Transverse colon (tissue), 4 donors: ENCODE measurements at regions of chr2 and their contacts with region 1.

Region 1: DNA sequence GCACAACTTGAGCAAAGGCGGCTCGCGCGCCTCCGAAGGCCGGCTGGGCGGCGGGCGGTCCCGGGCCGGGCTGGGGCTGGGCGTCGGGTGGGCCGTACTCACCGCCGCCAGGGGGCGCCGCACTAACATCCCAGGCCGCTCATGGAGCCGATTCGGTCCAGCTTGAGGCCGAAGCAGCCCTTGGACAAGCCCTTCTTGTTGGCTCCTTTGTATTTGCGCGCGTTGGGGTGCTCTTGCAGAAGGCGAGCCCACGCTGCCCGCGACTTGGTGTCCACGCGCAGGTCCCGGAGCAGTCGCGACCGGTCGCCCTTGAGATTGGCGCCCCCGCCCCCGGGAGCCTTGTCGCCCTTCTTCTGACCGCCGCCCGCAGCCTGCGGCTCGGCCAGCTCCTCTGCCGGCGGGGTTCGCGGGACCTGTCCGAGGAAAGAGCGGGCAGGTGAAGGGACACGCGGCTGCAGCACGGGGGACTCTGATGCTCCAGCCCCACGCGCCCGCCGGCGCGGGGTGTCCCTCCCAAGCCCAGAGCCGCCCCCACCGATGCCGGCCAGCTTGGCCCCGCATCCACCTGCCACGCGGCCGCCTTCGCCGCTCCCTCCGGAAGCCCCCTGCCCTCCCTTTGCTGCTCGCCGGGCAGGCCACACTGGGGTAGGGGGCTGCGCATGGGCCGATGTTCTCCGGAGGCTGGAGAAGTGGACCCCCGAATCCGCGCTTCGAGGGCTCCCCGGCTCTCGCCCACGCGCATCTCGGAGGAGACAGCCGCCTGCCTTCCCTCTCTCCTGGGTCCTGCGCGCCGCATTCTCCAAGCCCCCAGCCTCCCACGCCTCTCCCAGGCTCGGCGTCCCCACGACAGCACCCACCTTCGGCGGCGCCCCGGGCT is 655 bp downstream of the NPPC start:
- DNase-seq: peak; percentile 83
- H3K4me3 ChIP-seq: peak overlapping the region; percentile 13 to 49 (median 24)
- H3K27ac ChIP-seq: no peak overlapping the region
- H3K4me1 ChIP-seq: peaks cover 13 to 24% (median 20%) of the 10 kb centered on the region in 4 donors
- H3K27me3 ChIP-seq: peaks cover 74% of the 10 kb centered on the region
- CTCF ChIP-seq: peak; percentile 47 to 94 (median 90)
- EP300 ChIP-seq: no peak
- POLR2A ChIP-seq: no peak

Region 2: DNA sequence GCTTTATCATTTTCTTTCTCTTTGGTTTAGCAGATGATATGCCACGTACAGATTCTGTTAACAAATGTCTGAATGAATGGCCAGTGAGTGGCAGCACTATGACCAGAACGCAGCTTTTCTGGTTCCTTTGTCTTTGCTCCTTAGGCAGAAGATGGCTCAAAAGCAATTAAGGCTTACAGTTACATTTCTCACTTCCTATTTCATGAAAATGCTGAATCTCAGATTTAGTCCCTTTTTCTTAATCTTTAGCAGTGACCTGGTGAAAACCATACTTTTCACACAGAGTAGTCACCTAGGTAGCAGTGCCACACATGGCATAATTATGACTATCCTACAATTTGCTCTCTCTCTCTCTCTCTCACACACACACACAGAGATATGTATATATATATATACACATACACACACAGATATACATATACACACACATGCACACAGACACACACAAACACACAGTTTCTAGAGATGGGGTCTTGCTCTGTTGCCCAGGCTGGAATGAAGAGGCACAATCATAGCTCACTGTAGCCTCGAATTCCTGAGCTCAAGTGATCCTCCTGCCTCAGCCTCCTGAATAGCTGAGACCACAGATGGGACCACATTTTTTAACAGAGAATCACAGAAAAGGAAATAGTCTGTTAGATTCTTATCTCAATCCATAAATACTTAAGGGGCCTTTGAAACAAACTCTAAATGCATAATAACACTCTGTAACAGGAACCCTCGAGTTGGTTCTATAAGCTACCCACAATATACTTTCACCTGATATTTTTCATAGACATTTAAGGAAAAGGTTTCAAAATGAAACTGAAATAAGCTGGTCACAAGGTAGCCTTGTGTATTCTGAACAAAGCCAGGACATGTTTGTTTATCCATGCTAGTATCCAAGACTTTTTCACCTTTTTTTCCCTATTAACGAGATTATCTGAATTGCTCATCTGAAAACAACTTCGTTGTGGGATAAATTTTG is 156.1 kb before region 1 on chr2:
- in situ Hi-C with region 1: no loop called
- intact Hi-C with region 1: no loop called
- DNase-seq: no peak
- H3K4me3 ChIP-seq: no peak overlapping the region
- H3K27ac ChIP-seq: no peak overlapping the region
- H3K4me1 ChIP-seq: no peaks in the 10 kb centered on the region
- H3K27me3 ChIP-seq: no peaks in the 10 kb centered on the region
- CTCF ChIP-seq: no peak
- EP300 ChIP-seq: no peak
- POLR2A ChIP-seq: no peak

Region 3: GRCh38 chr2:231987124-231987727 is 61.7 kb after region 1 on chr2:
- in situ Hi-C with region 1: no loop called
- intact Hi-C with region 1: no loop called
- DNase-seq: no peak
- H3K4me3 ChIP-seq: no peak overlapping the region
- H3K27ac ChIP-seq: no peak overlapping the region
- H3K4me1 ChIP-seq: peaks cover 0 to 6% (median 2%) of the 10 kb centered on the region in 4 donors
- H3K27me3 ChIP-seq: no peaks in the 10 kb centered on the region
- CTCF ChIP-seq: no peak
- EP300 ChIP-seq: no peak
- POLR2A ChIP-seq: no peak

Region 4: DNA sequence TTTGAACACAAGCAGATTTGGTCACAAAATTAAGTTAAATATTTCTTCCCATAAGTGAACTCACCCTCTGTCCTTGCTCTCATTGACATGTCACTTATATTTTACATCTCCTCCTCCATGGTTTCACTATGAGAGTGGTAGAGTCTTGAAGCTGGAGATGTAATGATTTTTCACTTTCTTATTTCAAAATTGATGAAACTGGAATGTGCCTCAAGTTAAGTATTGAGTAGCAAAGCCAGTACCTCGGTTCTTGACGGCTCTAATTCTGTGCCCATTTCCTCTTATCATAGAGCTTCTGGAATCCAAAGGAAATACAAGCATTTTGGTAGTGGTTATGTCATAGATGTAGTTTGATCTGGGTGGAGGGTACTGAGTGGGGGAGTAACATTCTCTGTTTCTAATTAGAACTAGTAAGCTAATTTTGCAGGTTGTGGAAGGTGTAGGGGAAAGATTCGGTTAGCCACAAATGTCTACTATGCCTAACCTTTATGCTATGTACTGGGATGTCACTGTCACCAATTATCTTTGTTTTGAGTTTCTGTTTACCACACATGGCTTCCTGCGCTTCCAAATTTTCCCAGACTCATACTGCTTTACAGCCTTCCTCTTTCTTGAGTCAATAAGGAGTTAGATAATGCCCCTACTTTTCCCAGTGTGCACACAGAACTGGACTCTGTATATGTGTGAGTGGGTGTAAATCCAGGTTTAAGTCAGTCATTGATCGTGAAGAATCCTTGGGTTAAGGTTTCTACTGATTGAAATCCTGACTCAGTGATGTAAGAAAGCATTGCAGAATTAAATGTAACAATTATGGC is 132.7 kb after region 1 on chr2:
- in situ Hi-C with region 1: no loop called
- intact Hi-C with region 1: no loop called
- DNase-seq: no peak
- H3K4me3 ChIP-seq: no peak overlapping the region
- H3K27ac ChIP-seq: no peak overlapping the region
- H3K4me1 ChIP-seq: peaks cover 0 to 5% (median 0%) of the 10 kb centered on the region in 4 donors
- H3K27me3 ChIP-seq: no peaks in the 10 kb centered on the region
- CTCF ChIP-seq: no peak
- EP300 ChIP-seq: no peak
- POLR2A ChIP-seq: no peak

Region 5: DNA sequence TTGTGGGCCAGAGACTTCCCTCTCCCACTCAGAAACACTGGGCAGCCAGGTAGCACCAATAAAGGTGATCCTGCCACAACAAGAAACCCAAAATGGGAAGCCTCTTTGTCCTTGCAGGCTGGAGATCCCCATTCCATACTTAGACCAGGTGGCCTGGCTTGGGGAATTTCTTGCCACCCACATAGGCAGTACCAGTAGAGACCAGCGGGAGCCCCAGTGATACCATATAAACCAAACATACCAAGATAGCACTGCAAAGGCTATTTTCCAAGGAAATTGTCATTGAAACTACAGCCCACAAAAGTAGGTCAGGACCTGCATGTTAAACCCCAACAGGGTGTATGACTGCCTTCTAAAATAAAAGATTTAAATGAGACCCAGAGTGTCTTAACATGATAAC is 207.5 kb after region 1 on chr2:
- in situ Hi-C with region 1: loop called (anchors 10 to 25 kb)
- intact Hi-C with region 1: no loop called
- DNase-seq: no peak
- H3K4me3 ChIP-seq: no peak overlapping the region
- H3K27ac ChIP-seq: no peak overlapping the region
- H3K4me1 ChIP-seq: peaks cover 0 to 11% (median 0%) of the 10 kb centered on the region in 4 donors
- H3K27me3 ChIP-seq: no peaks in the 10 kb centered on the region
- CTCF ChIP-seq: no peak
- EP300 ChIP-seq: no peak
- POLR2A ChIP-seq: no peak

Region 6: GRCh38 chr2:232142049-232142448 is 216.5 kb after region 1 on chr2:
- in situ Hi-C with region 1: loop called (anchors 10 to 25 kb)
- intact Hi-C with region 1: loop called (anchors 5 kb)
- DNase-seq: no peak
- H3K4me3 ChIP-seq: no peak overlapping the region
- H3K27ac ChIP-seq: no peak overlapping the region
- H3K4me1 ChIP-seq: peaks cover 0 to 7% (median 0%) of the 10 kb centered on the region in 4 donors
- H3K27me3 ChIP-seq: no peaks in the 10 kb centered on the region
- CTCF ChIP-seq: peak; percentile 32 to 53 (median 48)
- EP300 ChIP-seq: no peak
- POLR2A ChIP-seq: no peak

Region 7: DNA sequence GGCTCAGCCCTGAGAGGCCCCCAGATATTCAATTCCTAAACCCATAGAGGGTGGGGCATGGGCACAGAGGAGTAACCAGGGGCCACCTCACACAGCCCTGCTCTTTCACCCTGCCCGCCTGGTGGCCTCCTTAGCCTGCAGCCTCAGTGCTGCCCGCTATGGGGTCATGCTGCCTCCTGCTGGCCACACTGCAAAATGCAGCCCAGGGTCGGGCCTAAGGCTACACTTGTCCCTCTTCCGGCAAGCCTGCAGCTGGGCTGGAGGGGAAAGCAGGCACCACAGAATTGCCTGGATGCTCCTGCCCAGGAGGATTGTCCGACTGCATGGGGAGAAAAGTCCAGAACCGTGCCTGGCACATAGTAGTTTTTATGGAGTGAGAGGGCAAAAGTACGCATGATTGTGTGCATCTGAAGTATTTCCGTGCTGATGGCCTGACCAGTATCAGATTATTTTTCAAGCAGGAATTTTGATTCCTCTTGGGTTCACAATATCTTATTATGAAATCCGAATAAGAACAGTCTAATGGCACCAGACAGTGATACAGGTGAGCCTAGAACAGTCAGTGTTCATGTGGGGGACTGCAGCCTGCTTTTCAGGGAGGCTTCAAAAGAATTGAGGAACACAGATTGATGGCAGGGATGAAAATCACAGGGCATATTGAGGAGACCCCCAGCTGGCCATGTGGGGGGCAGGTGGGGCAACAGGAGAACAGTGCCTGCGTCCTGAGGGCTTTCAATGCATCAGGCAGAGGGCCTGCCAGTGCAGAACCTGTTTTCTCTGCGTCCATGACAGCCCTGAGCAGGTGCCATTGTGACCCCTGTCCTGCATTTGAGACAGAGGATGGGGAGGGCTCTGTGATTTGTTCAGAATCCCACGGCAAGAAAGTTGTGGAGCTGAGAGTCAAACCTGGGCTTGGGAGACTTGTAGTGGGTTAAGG is 401.8 kb after region 1 on chr2:
- in situ Hi-C with region 1: loop called in 2 of 4 experiments (anchors 10 to 25 kb)
- intact Hi-C with region 1: loop called (anchors 2 kb)
- DNase-seq: peak; percentile 80
- H3K4me3 ChIP-seq: no peak overlapping the region
- H3K27ac ChIP-seq: no peak overlapping the region
- H3K4me1 ChIP-seq: no peaks in the 10 kb centered on the region
- H3K27me3 ChIP-seq: no peaks in the 10 kb centered on the region
- CTCF ChIP-seq: peak; percentile 73 to 96 (median 89)
- EP300 ChIP-seq: no peak
- POLR2A ChIP-seq: no peak